ENCODE measurements at regions of chr5 and their contacts with region 1.

Region 1: GRCh38 chr5:132064738-132065331 is 4.4 kb downstream of the IL3 start:
- DNase-seq: peak; percentile 89
- ATAC-seq: peak; percentile 80
- H3K4me3 Mint-ChIP-seq: no peak overlapping the region
- H3K27ac Mint-ChIP-seq: no peak overlapping the region
- H3K4me1 Mint-ChIP-seq: peaks cover 48% of the 10 kb centered on the region
- H3K27me3 Mint-ChIP-seq: no peaks in the 10 kb centered on the region

Region 2: DNA sequence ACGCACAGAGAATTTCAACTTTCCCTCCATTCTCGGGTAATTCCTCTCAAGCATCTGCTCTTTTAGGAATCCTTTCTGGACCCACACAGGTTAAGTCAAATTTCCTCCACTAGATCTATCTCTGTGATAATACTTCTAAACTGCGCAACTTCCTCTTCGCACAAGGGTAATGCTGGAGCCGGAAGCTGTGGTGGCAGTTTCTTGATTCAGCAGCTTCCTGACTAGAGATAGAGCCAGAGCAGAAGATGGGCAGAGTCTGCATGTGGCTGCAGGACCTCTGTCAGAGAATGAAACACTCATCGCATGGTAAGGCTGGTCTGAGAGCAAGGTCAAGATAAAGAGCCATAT is 812.0 kb before region 1 on chr5:
- CTCF ChIA-PET with region 1: no interaction called
- DNase-seq: peak; percentile 94
- ATAC-seq: peak; percentile 75
- H3K4me3 Mint-ChIP-seq: peak overlapping the region; percentile 82
- H3K27ac Mint-ChIP-seq: peak overlapping the region; percentile 94
- H3K4me1 Mint-ChIP-seq: peaks cover 53% of the 10 kb centered on the region
- H3K27me3 Mint-ChIP-seq: no peaks in the 10 kb centered on the region

Region 3: DNA sequence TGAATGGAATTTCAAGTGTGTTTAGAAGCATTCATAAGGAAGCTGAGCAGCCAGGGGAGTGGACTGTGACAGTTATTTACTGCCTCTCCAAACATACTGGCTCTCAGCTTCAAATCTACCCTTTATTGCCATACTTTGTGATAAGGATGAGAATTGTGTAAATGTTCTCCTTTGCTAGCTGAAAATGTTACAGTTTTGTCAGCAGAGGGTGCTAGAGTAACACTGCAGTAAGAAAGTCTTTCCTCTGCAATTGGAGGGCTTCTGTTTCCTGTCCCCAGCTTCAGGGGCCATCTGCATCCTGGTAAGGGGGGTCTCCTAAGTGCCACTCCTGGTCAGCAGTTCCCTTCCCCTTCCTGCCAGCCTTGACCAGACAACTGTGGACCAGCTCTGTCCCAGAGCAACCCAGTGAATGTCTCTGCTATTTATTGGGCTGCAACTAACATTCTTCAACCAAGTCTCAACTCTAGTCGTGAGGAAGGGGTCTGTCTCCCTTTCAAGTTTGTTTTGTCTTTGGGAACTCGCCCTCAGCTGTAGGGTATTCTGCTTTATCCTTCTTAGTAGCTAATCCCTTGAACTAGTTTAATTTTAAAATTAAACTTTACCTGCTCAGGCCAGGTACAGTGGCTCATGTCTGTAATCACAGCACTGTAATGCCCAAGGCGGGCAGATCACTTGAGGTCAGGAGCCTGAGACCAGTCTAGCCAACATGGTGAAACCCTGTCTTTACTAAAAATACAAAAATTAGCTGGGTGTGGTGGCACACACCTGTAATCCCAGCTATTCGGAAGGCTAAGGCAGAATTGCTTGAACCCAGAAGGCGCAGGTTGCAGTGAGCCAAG is 475.1 kb before region 1 on chr5:
- CTCF ChIA-PET with region 1: interaction called, 25 read pairs
- DNase-seq: peak; percentile 51
- ATAC-seq: peak; percentile 74
- H3K4me3 Mint-ChIP-seq: no peak overlapping the region
- H3K27ac Mint-ChIP-seq: no peak overlapping the region
- H3K4me1 Mint-ChIP-seq: peaks cover 37% of the 10 kb centered on the region
- H3K27me3 Mint-ChIP-seq: no peaks in the 10 kb centered on the region

Region 4: DNA sequence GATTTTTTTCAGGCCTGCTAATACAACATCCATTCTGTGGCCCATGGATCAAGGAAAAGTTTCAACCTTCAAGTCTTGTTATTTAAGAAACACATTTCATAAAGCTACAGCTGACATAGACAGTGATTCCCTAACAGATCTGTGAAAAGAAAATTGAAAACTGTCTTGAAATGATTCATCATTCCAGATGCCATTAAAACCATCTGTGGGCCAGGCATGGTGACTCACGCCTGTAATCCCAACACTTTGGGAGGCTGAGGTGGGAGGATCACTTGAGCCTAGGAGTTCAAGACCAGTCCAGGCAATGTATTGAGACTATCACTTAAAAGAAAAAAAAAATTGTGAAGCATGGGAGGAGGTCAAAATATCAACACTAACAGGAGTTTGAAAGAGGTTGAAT is 435.8 kb before region 1 on chr5:
- CTCF ChIA-PET with region 1: no interaction called
- DNase-seq: no peak
- ATAC-seq: no peak
- H3K4me3 Mint-ChIP-seq: no peak overlapping the region
- H3K27ac Mint-ChIP-seq: no peak overlapping the region
- H3K4me1 Mint-ChIP-seq: peaks cover 26% of the 10 kb centered on the region
- H3K27me3 Mint-ChIP-seq: no peaks in the 10 kb centered on the region

Region 5: DNA sequence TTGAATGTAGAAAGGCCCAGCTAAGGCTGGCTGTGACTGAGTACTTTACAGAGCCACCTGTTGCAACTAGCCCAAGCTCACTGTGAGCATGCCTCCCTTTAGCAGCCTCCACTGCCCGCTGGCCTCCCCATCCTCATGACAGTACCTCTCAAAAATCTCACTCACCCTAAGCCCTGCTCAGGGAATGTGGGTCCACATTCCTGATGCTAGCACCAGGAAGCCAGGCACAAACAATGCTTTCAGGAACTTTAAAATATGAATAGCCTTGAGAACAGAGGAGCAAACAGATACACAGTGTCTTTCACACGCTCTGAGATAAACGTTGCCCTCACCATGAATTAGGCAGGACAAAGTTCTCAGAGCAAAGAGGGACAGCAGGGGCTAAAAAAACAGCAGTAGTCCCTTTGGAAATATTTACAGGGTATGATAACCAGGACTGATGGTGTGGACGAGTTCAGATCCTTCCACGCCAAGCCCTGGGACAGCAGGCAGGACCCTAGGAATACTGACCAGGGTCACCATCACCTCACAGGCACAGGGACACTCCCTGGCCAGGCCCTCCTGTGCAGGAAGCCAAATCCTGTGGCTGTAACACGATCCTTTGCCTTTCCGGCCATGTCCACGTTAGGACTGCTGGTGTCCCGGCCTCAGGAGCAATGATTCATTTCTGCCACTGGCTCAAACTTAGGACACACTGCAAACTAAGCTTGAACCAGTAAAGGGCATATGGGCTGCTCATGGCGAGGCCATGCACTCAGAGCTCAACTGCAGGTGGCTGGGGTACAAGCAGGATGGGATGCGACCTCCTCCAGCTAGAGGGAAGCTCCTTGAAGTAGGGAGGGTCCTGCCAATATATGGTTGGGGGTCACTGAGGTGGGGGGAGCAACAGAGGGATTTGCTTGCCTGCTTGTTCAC is 62.9 kb before region 1 on chr5:
- CTCF ChIA-PET with region 1: interaction called, 72 read pairs
- DNase-seq: no peak
- ATAC-seq: no peak
- H3K4me3 Mint-ChIP-seq: no peak overlapping the region
- H3K27ac Mint-ChIP-seq: peak overlapping the region; percentile 31
- H3K4me1 Mint-ChIP-seq: peaks cover 45% of the 10 kb centered on the region
- H3K27me3 Mint-ChIP-seq: no peaks in the 10 kb centered on the region

Region 6: GRCh38 chr5:132019857-132020555 is 44.8 kb before region 1 on chr5:
- CTCF ChIA-PET with region 1: interaction called, 28 read pairs
- DNase-seq: peak; percentile 95
- ATAC-seq: peak; percentile 94
- H3K4me3 Mint-ChIP-seq: peak overlapping the region; percentile 55
- H3K27ac Mint-ChIP-seq: peak overlapping the region; percentile 91
- H3K4me1 Mint-ChIP-seq: peaks cover 48% of the 10 kb centered on the region
- H3K27me3 Mint-ChIP-seq: peaks cover 54% of the 10 kb centered on the region

Region 7: DNA sequence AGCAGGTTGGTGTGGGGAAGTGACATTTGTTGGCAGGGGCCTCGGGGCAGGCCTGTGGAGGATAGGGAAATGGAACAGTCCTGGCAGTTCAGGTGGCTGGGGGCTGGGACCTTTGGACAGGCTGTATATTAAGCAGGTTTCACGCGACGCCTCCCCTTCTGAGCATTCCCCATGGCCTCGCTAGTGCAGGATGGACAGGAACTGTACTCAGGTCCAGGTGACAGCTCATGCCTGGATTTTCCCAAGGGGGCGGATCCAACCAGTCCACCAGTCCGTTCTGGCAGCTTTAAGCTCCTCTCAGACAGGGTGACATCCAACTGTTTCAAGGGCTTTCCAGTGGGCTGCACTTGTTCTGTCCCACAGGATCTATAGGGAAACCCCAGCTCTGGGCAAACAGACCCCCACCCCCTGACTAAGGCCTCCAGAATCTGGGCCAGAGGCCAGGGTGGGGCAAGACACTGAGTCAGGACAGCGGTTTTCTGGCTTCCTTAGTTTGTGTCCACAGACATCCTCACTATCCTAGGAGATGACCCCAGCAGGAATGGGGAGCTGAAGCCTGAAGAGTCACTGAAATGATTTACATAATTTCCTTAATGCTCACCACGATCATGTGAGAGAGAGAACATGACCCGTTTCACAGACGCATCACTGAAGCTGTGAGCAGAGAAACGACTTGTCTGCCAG is 29.7 kb after region 1 on chr5:
- CTCF ChIA-PET with region 1: interaction called, 15 read pairs
- DNase-seq: no peak
- ATAC-seq: no peak
- H3K4me3 Mint-ChIP-seq: no peak overlapping the region
- H3K27ac Mint-ChIP-seq: no peak overlapping the region
- H3K4me1 Mint-ChIP-seq: peaks cover 49% of the 10 kb centered on the region
- H3K27me3 Mint-ChIP-seq: no peaks in the 10 kb centered on the region

Region 8: DNA sequence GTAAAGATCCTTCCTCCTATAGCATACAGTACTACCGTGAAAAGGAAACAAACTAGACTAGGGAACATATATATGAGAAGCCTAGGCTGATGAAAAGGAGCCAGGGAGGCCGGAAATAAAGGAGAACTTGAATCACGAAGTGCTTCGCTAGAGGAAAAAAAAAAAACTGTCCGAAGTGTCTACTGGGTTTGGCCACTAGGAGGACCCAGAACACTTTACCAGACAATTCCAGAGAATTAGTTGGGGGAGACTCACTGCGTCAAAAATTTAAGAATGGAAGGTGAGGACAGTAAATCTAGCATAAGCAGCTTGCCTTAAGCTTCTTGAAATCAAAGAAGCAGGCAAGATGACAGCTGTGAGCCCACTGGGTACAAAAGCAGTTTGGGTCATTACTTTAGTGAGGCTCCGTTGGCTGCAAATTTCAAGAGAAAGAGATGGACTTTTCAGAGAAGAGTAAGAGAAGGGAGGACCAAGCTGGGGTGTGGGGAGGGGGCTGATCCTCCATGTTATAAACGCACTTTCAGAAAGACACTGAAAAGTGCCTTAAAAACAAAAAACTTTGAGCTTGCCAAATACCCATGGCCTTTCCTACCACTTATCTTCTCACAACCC is 115.4 kb after region 1 on chr5:
- CTCF ChIA-PET with region 1: interaction called, 41 read pairs
- DNase-seq: no peak
- ATAC-seq: peak; percentile 25
- H3K4me3 Mint-ChIP-seq: peak overlapping the region; percentile 25
- H3K27ac Mint-ChIP-seq: peak overlapping the region; percentile 84
- H3K4me1 Mint-ChIP-seq: peaks cover 49% of the 10 kb centered on the region
- H3K27me3 Mint-ChIP-seq: no peaks in the 10 kb centered on the region

Region 9: GRCh38 chr5:132369474-132370180 is 304.8 kb after region 1 on chr5 and contains the start of gene SLC22A5:
- CTCF ChIA-PET with region 1: interaction called, 12 read pairs
- DNase-seq: peak; percentile 73
- ATAC-seq: peak; percentile 97
- H3K4me3 Mint-ChIP-seq: peak within 1 kb of the TSS; percentile 75
- H3K27ac Mint-ChIP-seq: peak within 1 kb of the TSS; percentile 52
- H3K4me1 Mint-ChIP-seq: peaks cover 20% of the 10 kb centered on the region
- H3K27me3 Mint-ChIP-seq: no peaks in the 10 kb centered on the region
- total RNA-seq, gene SLC22A5: 3.9 to 4.5 TPM